ENCODE measurements at regions of chr5 and their contacts with region 1.

Region 1: GRCh38 chr5:55072666-55073065 is 29.8 kb upstream of the GZMA start:
- DNase-seq: peak in 3 of 14 experiments; percentile 45 to 87 (median 53)
- ATAC-seq: peak; percentile 94
- H3K4me3 ChIP-seq: no peak overlapping the region
- H3K4me3 Mint-ChIP-seq: peak overlapping the region; percentile 4
- H3K27ac ChIP-seq: peak overlapping the region in 1 of 2 donors; percentile 41
- H3K27ac Mint-ChIP-seq: peak overlapping the region; percentile 78
- H3K4me1 ChIP-seq: peaks cover 19% of the 10 kb centered on the region
- H3K4me1 Mint-ChIP-seq: peaks cover 34% of the 10 kb centered on the region
- H3K27me3 ChIP-seq: no peaks in the 10 kb centered on the region
- H3K27me3 Mint-ChIP-seq: no peaks in the 10 kb centered on the region
- CTCF ChIP-seq: no peak

Region 2: GRCh38 chr5:55021410-55021809 is 51.3 kb before region 1 on chr5:
- CTCF ChIA-PET with region 1: no interaction called
- POLR2A ChIA-PET with region 1: no interaction called
- intact Hi-C with region 1: loop called in 1 of 2 experiments (anchors 5 kb)
- DNase-seq: no peak
- ATAC-seq: no peak
- H3K4me3 ChIP-seq: no peak overlapping the region
- H3K4me3 Mint-ChIP-seq: no peak overlapping the region
- H3K27ac ChIP-seq: peak overlapping the region in 1 of 2 donors; percentile 10
- H3K27ac Mint-ChIP-seq: no peak overlapping the region
- H3K4me1 ChIP-seq: peaks cover 21% of the 10 kb centered on the region
- H3K4me1 Mint-ChIP-seq: peaks cover 58% of the 10 kb centered on the region
- H3K27me3 ChIP-seq: no peaks in the 10 kb centered on the region
- H3K27me3 Mint-ChIP-seq: no peaks in the 10 kb centered on the region
- CTCF ChIP-seq: no peak

Region 3: DNA sequence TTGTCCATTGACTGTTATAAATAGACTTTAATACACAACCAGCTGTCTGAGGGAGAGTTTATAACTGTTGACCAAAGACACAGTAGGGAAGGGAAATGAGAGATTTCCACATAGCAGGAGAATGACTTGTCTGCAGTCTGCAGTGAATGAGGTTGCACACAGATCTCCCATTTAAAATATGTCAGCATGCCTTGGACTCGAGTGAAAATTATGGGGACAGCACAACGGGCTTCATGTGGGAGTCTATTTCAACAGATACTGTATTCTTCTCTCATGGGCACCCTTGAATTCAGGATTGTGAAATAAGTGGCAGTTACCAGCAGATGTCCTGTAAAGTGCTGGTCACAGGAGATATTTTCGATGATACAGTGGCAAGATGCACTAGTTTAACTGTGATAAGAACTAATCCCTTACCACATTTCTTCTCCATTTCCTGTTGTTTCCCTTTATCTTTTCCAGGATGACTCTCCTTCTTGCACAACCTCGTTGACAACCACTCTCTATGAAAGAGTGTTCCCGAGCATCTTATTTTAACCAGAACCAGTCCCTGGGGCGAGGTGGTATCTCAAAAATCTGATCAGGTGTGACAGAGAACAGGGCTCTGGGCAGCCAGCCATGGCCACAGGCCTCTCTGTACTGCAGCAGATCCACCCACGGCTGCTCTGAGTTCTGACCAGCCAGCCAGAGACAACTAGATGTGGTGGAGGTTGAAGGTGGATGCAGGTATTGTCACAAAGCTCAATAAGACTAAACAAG is 1691.2 kb after region 1 on chr5:
- CTCF ChIA-PET with region 1: no interaction called
- POLR2A ChIA-PET with region 1: no interaction called
- intact Hi-C with region 1: no loop called
- DNase-seq: no peak
- ATAC-seq: no peak
- H3K4me3 ChIP-seq: no peak overlapping the region
- H3K4me3 Mint-ChIP-seq: no peak overlapping the region
- H3K27ac ChIP-seq: no peak overlapping the region
- H3K27ac Mint-ChIP-seq: no peak overlapping the region
- H3K4me1 ChIP-seq: no peaks in the 10 kb centered on the region
- H3K4me1 Mint-ChIP-seq: peaks cover 7% of the 10 kb centered on the region
- H3K27me3 ChIP-seq: no peaks in the 10 kb centered on the region
- H3K27me3 Mint-ChIP-seq: no peaks in the 10 kb centered on the region
- CTCF ChIP-seq: no peak